PC-9 (cell line): ENCODE measurements at regions of chr2 and their contacts with region 1.

Region 1: DNA sequence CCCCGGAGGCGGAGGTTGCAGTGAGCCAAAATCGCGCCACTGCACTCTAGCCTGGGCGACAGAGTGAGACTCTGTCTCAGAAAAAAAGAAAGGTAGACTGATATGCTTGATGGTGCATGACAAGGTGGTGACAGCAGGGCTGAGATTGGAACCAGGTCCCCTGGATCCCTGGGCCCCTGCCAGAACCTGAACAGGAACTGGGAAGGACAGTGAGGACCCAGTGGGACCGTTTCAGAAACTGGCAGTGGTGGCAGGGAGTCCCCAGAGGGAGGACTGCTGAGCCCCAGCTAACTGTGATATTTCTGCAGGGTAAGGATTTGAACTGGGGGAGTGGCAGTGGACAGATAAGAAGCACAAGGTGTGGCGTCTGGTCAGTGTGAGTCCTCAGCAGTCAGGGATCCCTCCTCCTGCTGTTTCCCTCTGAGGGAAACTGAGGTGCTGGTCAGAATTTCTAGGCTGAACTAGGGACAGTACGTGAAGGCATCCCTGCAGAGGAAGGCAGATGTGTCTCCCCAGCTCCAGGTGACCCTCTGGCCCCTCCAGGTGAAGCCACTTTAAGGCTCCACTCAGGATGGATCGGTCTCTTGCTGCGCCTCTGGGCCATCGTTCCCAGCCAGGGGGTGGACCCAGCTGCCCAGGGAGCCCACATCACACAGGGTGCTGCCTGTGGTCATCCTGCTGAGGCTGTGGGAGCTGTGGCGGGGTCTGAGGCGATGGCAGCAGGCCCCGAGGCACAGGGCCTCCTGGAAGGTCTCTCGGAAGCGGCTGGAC is 5.6 kb downstream of the NMUR1 start:
- DNase-seq: no peak
- H3K4me3 ChIP-seq: no peak overlapping the region
- H3K27ac ChIP-seq: no peak overlapping the region
- H3K4me1 ChIP-seq: no peaks in the 10 kb centered on the region
- H3K27me3 ChIP-seq: no peaks in the 10 kb centered on the region
- CTCF ChIP-seq: no peak

Region 2: GRCh38 chr2:230537531-230537976 is 987.1 kb before region 1 on chr2:
- CTCF ChIA-PET with region 1: interaction called, 12 read pairs
- POLR2A ChIA-PET with region 1: no interaction called
- intact Hi-C with region 1: no loop called
- DNase-seq: no peak
- H3K4me3 ChIP-seq: no peak overlapping the region
- H3K27ac ChIP-seq: no peak overlapping the region
- H3K4me1 ChIP-seq: no peaks in the 10 kb centered on the region
- H3K27me3 ChIP-seq: no peaks in the 10 kb centered on the region
- CTCF ChIP-seq: no peak